Heart right ventricle (tissue), 16 donors: ENCODE measurements at regions of chr16 and their contacts with region 1.

Region 1: DNA sequence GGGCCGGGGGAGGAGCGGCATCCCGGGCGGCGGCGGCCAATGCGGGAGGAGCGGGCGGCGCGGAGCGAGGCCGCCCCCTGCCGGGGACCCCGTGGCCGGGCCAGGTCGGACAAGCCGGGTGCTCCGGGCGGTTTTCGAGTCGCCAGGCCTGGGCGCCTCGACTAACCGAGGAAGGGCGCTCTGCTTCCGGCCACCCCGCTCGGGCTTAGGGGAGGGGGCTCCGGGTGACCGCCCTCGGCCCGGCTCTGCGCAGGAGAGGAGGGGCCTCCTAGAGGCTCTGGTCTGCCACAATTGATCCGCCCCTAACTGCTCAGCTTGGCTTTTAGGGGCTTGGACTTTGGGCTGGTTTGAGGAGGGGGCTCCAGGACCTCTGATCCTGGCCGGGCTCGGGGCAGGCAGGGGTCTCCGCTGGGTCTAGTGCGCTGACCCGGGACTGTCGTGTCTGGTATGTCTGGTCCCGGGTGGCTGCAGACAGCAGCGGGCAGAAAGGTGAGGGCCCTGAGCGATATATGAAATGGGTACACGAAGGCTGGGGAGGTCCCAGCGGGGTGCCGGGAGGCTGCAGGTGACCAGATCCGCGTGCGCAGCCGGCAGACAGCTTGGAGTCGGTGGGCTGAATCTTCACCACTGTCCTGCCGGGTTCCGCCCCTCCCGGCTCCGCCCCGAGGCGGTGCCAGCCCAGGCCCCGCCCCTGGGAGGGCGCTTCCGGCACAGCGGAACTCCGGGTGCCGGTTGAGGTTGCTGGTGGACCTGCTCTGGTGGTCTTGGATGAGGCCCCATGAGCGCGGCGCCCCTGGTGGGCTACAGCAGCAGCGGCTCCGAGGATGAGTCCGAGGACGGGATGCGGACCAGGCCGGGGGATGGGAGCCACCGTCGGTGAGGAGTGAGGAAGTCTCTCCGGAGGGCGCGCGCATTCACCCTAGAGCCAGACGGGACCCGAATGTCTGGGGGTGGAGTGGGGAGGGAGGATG is at the start of gene USB1:
- DNase-seq: peak; percentile 86 to 92
- ATAC-seq: peak; percentile 92 to 98 (median 95)
- H3K4me3 ChIP-seq: peak within 1 kb of the TSS; percentile 57 to 97 (median 72)
- H3K27ac ChIP-seq: peak within 1 kb of the TSS; percentile 86 to 97 (median 92)
- H3K4me1 ChIP-seq: peaks cover 6 to 53% (median 33%) of the 10 kb centered on the region in 9 donors
- H3K27me3 ChIP-seq: no peaks in the 10 kb centered on the region
- CTCF ChIP-seq: peak; percentile 58 to 91 (median 80)
- total RNA-seq, gene USB1: 21.1 to 39.2 (median 31.5) TPM

Region 2: DNA sequence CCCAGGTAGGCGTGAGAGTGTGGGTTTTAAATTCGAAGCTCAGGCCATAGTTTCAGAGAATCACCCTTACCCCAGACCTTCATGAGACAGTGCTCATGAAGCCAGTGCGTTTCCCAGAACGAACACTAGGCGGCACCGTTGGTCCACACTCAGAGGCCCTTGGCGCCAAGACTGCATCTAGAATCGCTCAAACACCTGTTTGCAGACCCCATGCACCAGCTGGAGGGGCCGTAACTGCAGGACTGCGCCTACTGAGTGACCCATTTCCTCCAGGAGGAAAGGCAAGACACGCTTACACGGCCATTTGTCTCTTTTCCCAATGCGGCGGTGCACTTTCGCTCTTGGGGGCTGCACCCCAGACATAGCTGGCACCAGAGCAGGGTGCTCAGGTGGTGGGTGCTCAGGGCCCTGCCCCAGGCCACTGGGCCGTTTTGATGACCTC is 424.5 kb before region 1 on chr16:
- intact Hi-C with region 1: loop called in 6 of 10 experiments (anchors 5 to 10 kb)
- DNase-seq: peak; percentile 66 to 77
- ATAC-seq: peak in 7 of 8 donors; percentile 44 to 85 (median 79)
- H3K4me3 ChIP-seq: no peak overlapping the region
- H3K27ac ChIP-seq: no peak overlapping the region
- H3K4me1 ChIP-seq: peaks cover 0 to 10% (median 0%) of the 10 kb centered on the region in 9 donors
- H3K27me3 ChIP-seq: peaks cover 0 to 34% (median 10%) of the 10 kb centered on the region in 7 donors
- CTCF ChIP-seq: peak; percentile 87 to 98 (median 94)

Region 3: GRCh38 chr16:57600048-57600835 is 400.7 kb before region 1 on chr16:
- intact Hi-C with region 1: loop called in 1 of 10 experiments (anchors 10 kb)
- DNase-seq: peak; percentile 45 to 52
- ATAC-seq: peak; percentile 58 to 94 (median 86)
- H3K4me3 ChIP-seq: no peak overlapping the region
- H3K27ac ChIP-seq: peak overlapping the region in 1 of 10 donors; percentile 75
- H3K4me1 ChIP-seq: peaks cover 0 to 36% (median 0%) of the 10 kb centered on the region in 9 donors
- H3K27me3 ChIP-seq: peaks cover 0 to 28% (median 0%) of the 10 kb centered on the region in 7 donors
- CTCF ChIP-seq: peak; percentile 52 to 80 (median 72)

Region 4: DNA sequence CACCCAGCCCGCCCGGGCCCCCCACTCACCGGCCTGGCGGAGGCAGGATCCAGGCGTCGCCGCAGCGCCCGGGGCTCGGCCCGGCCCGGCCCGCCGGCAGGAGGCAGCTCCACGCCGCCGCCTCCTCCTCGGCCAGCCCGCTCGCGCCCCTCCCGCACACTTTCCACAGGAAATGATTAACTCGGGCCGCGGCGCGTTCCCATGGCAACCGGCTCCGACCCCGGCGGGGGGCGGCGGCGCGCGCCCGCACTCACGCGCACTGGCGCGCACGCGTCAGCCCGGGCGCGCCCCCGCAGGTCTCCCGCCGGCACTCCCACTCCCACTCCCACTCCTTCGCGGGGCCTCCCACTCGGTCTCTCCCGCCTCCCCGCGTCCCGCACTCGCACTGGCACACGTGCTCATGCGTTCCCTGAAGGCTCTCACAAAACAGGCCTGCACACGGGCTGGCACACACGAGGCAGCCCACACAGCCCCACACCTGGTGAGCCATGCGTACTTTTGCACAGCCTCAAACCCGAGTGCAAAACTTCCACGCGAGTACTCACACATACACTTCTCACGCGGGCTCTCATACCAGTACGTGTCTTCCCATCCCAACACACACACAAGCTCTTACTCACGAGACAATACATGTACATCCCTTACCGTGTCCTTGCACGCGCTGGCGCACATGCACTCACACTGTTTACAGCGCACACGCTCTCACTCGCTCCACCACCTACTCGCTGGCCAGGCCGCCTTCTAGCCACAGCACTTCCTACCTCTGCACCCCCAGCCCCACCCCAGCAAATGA is 198.5 kb before region 1 on chr16 and contains the start of gene KIFC3:
- intact Hi-C with region 1: loop called in 2 of 10 experiments (anchors 2 to 5 kb)
- DNase-seq: peak; percentile 90 to 91
- ATAC-seq: peak; percentile 9 to 76 (median 34)
- H3K4me3 ChIP-seq: peak within 1 kb of the TSS; percentile 51 to 85 (median 66)
- H3K27ac ChIP-seq: peak within 1 kb of the TSS; percentile 89 to 99 (median 96)
- H3K4me1 ChIP-seq: peaks cover 34 to 81% (median 68%) of the 10 kb centered on the region in 9 donors
- H3K27me3 ChIP-seq: peaks cover 0 to 12% (median 0%) of the 10 kb centered on the region in 7 donors
- CTCF ChIP-seq: peak in 5 of 9 donors; percentile 34 to 60 (median 44)
- total RNA-seq, gene KIFC3: 42.5 to 91.4 (median 63.5) TPM

Region 5: DNA sequence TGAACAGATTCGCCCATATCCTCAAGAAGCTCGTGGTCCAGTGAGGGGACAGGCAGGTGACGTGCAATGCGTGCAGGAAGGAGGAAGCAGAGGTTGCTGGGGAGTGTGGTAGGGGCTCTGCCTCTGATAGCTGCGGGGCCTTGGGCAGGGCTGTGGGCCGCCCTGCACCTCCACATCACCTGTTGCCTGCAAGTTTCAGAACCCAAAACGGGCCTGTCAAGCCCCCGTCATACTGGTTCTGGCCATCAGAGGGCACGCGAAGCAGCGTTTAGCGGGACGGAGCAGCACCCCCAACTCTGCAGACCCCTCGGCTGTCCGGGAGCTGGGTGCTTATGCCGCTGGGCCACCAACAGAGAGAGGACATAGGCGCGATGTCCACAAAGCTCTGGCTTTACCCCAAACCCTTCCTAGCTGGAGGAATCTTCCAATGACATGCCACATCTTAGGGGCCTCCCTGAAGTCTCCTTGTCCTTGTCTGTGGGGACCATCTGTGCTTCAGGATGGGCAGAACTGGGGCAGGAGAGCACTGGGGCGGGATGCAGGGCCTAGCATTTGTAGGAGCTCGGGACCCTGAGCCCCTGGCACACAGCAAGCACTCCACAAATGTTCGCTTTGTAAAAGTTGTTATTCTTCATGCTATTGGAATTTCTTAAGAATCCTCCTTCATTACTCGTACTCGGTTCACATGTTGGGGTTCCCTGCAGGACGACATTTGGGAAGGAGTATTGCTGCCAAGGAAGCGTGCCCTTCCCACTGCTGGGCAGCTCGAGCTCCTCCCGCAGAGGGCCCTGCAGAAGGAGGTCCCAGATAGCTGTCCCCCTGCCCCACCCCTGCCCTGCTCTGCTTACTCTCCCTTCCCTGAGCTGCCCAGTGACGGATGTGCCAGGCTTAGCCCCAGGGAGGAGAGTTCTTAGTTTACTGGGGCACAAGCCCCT is 94.3 kb before region 1 on chr16:
- intact Hi-C with region 1: loop called in 4 of 10 experiments (anchors 2 to 5 kb)
- DNase-seq: peak in 1 of 2 donors; percentile 25
- ATAC-seq: peak in 6 of 8 donors; percentile 38 to 58 (median 42)
- H3K4me3 ChIP-seq: no peak overlapping the region
- H3K27ac ChIP-seq: no peak overlapping the region
- H3K4me1 ChIP-seq: peaks cover 0 to 4% (median 0%) of the 10 kb centered on the region in 9 donors
- H3K27me3 ChIP-seq: peaks cover 0 to 31% (median 20%) of the 10 kb centered on the region in 7 donors
- CTCF ChIP-seq: peak; percentile 31 to 67 (median 55)

Region 6: GRCh38 chr16:58160855-58161254 is 159.9 kb after region 1 on chr16:
- intact Hi-C with region 1: no loop called
- DNase-seq: no peak
- ATAC-seq: no peak
- H3K4me3 ChIP-seq: no peak overlapping the region
- H3K27ac ChIP-seq: no peak overlapping the region
- H3K4me1 ChIP-seq: peaks cover 0 to 13% (median 0%) of the 10 kb centered on the region in 9 donors
- H3K27me3 ChIP-seq: no peaks in the 10 kb centered on the region
- CTCF ChIP-seq: no peak